ENCODE measurements at regions of chr2 and their contacts with region 1.

Region 1: GRCh38 chr2:101518578-101519492 is 43.9 kb upstream of the RFX8 start:
- ATAC-seq: peak; percentile 52 to 91 (median 68)
- H3K4me3 ChIP-seq: no peak overlapping the region
- H3K27ac ChIP-seq: no peak overlapping the region
- H3K4me1 ChIP-seq: peaks cover 3 to 8% of the 10 kb centered on the region in 2 donors

Region 2: DNA sequence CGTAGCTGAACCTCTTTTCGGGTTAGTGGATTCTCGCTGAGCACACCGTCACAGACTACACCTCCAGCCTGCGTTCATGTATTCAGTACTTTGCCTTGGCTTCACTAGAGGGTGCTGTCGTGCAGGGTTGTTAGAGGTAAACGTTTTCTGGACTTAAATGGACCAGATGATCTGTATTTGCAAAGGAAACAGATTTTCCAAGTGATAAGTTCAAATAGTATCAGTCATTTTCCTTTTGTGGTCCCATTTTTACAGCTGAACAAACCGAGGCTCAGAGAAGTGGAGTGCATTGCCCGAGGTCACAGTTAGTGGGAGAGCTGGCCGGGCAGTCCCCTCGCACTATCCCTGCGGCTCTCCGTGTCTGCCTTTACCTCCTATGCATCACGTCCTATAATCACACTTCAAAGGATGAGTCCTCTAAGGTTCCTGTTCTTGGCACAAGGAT is 304.5 kb after region 1 on chr2:
- in situ Hi-C with region 1: loop called in 1 of 9 experiments (anchors 25 kb)
- ATAC-seq: peak in 4 of 8 experiments; percentile 32 to 51 (median 35)
- H3K4me3 ChIP-seq: no peak overlapping the region
- H3K27ac ChIP-seq: no peak overlapping the region
- H3K4me1 ChIP-seq: peaks cover 9 to 11% of the 10 kb centered on the region in 2 donors

Region 3: GRCh38 chr2:101998896-101999789 is 480.3 kb after region 1 on chr2:
- in situ Hi-C with region 1: no loop called
- ATAC-seq: no peak
- H3K4me3 ChIP-seq: no peak overlapping the region
- H3K27ac ChIP-seq: no peak overlapping the region
- H3K4me1 ChIP-seq: no peaks in the 10 kb centered on the region